T-cell (primary cell): ENCODE measurements at regions of chr16 and their contacts with region 1.

Region 1: DNA sequence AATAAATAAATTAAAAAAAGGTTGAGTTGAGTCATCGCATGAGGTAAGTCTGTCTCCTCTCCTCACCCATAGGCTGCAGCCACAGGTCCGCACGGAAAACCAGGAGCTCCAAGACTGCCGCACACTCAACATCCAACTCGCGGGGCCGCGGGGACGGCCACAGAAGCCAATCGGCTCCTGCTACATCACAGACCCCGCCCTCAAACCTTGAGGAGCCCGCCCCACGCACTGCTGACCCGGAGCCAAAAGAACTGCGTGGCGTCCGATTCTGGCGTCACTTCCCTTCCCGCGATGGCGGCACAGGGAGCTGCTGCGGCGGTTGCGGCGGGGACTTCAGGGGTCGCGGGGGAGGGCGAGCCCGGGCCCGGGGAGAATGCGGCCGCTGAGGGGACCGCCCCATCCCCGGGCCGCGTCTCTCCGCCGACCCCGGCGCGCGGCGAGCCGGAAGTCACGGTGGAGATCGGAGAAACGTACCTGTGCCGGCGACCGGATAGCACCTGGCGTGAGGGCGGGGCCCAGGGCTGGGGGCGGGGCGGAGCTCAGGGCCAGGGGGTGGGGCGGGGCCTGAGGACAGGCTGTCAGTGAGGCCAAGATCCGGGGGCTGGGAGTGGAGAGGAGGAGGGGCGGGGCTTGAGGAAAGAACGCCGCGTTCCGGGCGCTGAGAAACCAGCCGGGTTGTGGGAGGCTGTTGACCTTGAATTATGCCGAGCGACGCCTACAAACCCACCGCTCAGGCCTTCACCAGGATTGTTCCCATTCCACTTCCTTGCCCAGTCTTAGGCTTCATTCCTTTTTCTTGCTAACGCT is at the start of gene KAT8:
- DNase-seq: peak; percentile 93 to 98 (median 96)
- ATAC-seq: peak; percentile 92 to 97 (median 95)
- H3K4me3 ChIP-seq: peak within 1 kb of the TSS; percentile 55 to 61
- H3K4me3 Mint-ChIP-seq: peak within 1 kb of the TSS; percentile 81 to 89 (median 88)
- H3K27ac ChIP-seq: peak within 1 kb of the TSS; percentile 68
- H3K27ac Mint-ChIP-seq: peak within 1 kb of the TSS; percentile 91 to 93
- H3K4me1 ChIP-seq: peaks cover 6 to 23% of the 10 kb centered on the region in 2 experiments
- H3K4me1 Mint-ChIP-seq: peaks cover 15 to 21% (median 21%) of the 10 kb centered on the region in 3 donors
- H3K27me3 ChIP-seq: no peaks in the 10 kb centered on the region
- H3K27me3 Mint-ChIP-seq: no peaks in the 10 kb centered on the region
- total RNA-seq, gene KAT8: 92.3 to 122 (median 102) TPM

Region 2: DNA sequence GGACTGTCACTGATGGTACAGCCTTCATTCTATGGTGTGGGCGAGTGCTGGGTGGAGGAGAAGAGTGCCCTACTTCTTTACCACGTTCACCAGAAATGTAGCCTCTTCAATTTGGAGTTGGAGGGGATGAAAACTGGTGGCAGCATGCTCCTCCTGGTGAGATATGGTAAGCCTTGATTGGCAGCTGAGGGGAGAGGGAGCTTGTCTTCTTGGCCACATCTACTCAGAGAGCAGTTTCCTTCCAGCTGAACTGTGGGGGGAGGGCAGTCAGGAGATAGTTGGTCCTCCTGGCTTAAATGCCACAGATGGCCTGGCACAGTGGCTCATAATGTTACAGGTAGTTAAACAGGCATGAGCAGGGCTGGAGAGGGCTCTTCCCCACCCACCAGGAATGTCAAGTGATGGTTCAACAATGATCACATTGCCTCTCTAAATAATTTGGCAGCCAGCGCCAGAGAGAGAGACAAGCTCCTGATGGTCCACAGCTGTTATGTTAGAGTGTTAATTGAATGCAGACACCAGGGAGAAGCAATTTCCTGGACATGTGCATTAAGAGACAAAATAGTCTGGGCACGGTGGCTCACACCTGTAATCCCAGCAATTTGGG is 985.6 kb before region 1 on chr16:
- CTCF ChIA-PET with region 1: no interaction called
- POLR2A ChIA-PET with region 1: interaction called in 1 of 2 experiments, 13 read pairs
- DNase-seq: no peak
- ATAC-seq: no peak
- H3K4me3 ChIP-seq: no peak overlapping the region
- H3K4me3 Mint-ChIP-seq: no peak overlapping the region
- H3K27ac ChIP-seq: no peak overlapping the region
- H3K27ac Mint-ChIP-seq: peak overlapping the region in 1 of 2 donors; percentile 19
- H3K4me1 ChIP-seq: peaks cover 0 to 7% of the 10 kb centered on the region in 2 experiments
- H3K4me1 Mint-ChIP-seq: peaks cover 0 to 8% (median 4%) of the 10 kb centered on the region in 3 donors
- H3K27me3 ChIP-seq: no peaks in the 10 kb centered on the region
- H3K27me3 Mint-ChIP-seq: no peaks in the 10 kb centered on the region

Region 3: GRCh38 chr16:30876867-30877266 is 240.7 kb before region 1 on chr16:
- CTCF ChIA-PET with region 1: no interaction called
- POLR2A ChIA-PET with region 1: no interaction called
- DNase-seq: no peak
- ATAC-seq: no peak
- H3K4me3 ChIP-seq: peak overlapping the region; percentile 8 to 71
- H3K4me3 Mint-ChIP-seq: peak overlapping the region; percentile 91 to 97 (median 93)
- H3K27ac ChIP-seq: peak overlapping the region; percentile 89
- H3K27ac Mint-ChIP-seq: peak overlapping the region; percentile 86 to 98
- H3K4me1 ChIP-seq: peaks cover 16 to 46% of the 10 kb centered on the region in 2 experiments
- H3K4me1 Mint-ChIP-seq: peaks cover 36 to 43% (median 37%) of the 10 kb centered on the region in 3 donors
- H3K27me3 ChIP-seq: no peaks in the 10 kb centered on the region
- H3K27me3 Mint-ChIP-seq: no peaks in the 10 kb centered on the region

Region 4: GRCh38 chr16:30941600-30942425 is 175.8 kb before region 1 on chr16:
- CTCF ChIA-PET with region 1: no interaction called
- POLR2A ChIA-PET with region 1: interaction called in 1 of 2 experiments, 14 read pairs
- DNase-seq: peak in 29 of 35 experiments; percentile 29 to 81 (median 49)
- ATAC-seq: peak; percentile 93 to 94 (median 94)
- H3K4me3 ChIP-seq: peak overlapping the region in 1 of 2 donors; percentile 14
- H3K4me3 Mint-ChIP-seq: no peak overlapping the region
- H3K27ac ChIP-seq: peak overlapping the region; percentile 53
- H3K27ac Mint-ChIP-seq: peak overlapping the region; percentile 61 to 79
- H3K4me1 ChIP-seq: peaks cover 0 to 13% of the 10 kb centered on the region in 2 experiments
- H3K4me1 Mint-ChIP-seq: peaks cover 15 to 28% (median 20%) of the 10 kb centered on the region in 3 donors
- H3K27me3 ChIP-seq: no peaks in the 10 kb centered on the region
- H3K27me3 Mint-ChIP-seq: no peaks in the 10 kb centered on the region

Region 5: GRCh38 chr16:31179747-31180459 is 62.3 kb after region 1 on chr16 and contains the start of gene FUS:
- CTCF ChIA-PET with region 1: interaction called in 1 of 2 experiments, 3 read pairs
- POLR2A ChIA-PET with region 1: interaction called in 1 of 2 experiments, 16 read pairs
- DNase-seq: peak; percentile 78 to 98 (median 89)
- ATAC-seq: peak; percentile 64 to 79 (median 69)
- H3K4me3 ChIP-seq: peak within 1 kb of the TSS; percentile 90 to 92
- H3K4me3 Mint-ChIP-seq: peak within 1 kb of the TSS; percentile 97 to 98 (median 98)
- H3K27ac ChIP-seq: peak within 1 kb of the TSS; percentile 89
- H3K27ac Mint-ChIP-seq: peak within 1 kb of the TSS; percentile 99
- H3K4me1 ChIP-seq: peaks cover 48 to 70% of the 10 kb centered on the region in 2 experiments
- H3K4me1 Mint-ChIP-seq: peaks cover 58 to 70% (median 65%) of the 10 kb centered on the region in 3 donors
- H3K27me3 ChIP-seq: no peaks in the 10 kb centered on the region
- H3K27me3 Mint-ChIP-seq: peaks cover 0 to 2% of the 10 kb centered on the region in 2 donors
- total RNA-seq, gene FUS: 410 to 963 (median 434) TPM